ENCODE measurements at regions of chr9 and their contacts with region 1.

Region 1: GRCh38 chr9:3099646-3100045 is 255.8 kb upstream of the PUM3 start:
- DNase-seq: no peak
- H3K4me3 ChIP-seq: no peak overlapping the region
- H3K27ac ChIP-seq: no peak overlapping the region
- H3K4me1 ChIP-seq: no peaks in the 10 kb centered on the region
- H3K27me3 ChIP-seq: no peaks in the 10 kb centered on the region
- CTCF ChIP-seq: no peak

Region 2: GRCh38 chr9:3080951-3081350 is 18.7 kb before region 1 on chr9:
- CTCF ChIA-PET with region 1: no interaction called
- POLR2A ChIA-PET with region 1: interaction called, 11 read pairs
- intact Hi-C with region 1: no loop called
- DNase-seq: no peak
- H3K4me3 ChIP-seq: no peak overlapping the region
- H3K27ac ChIP-seq: no peak overlapping the region
- H3K4me1 ChIP-seq: no peaks in the 10 kb centered on the region
- H3K27me3 ChIP-seq: no peaks in the 10 kb centered on the region
- CTCF ChIP-seq: no peak

Region 3: GRCh38 chr9:3125597-3126405 is 26.2 kb after region 1 on chr9:
- CTCF ChIA-PET with region 1: no interaction called
- POLR2A ChIA-PET with region 1: no interaction called
- intact Hi-C with region 1: no loop called
- DNase-seq: no peak
- H3K4me3 ChIP-seq: no peak overlapping the region
- H3K27ac ChIP-seq: no peak overlapping the region
- H3K4me1 ChIP-seq: no peaks in the 10 kb centered on the region
- H3K27me3 ChIP-seq: no peaks in the 10 kb centered on the region
- CTCF ChIP-seq: no peak

Measured in PC-9 (cell line).